Activated B cell treated with CpG ODN at 0.5 μM for 24 hours (primary cell): ENCODE measurements at regions of chr10 and their contacts with region 1.

Region 1: DNA sequence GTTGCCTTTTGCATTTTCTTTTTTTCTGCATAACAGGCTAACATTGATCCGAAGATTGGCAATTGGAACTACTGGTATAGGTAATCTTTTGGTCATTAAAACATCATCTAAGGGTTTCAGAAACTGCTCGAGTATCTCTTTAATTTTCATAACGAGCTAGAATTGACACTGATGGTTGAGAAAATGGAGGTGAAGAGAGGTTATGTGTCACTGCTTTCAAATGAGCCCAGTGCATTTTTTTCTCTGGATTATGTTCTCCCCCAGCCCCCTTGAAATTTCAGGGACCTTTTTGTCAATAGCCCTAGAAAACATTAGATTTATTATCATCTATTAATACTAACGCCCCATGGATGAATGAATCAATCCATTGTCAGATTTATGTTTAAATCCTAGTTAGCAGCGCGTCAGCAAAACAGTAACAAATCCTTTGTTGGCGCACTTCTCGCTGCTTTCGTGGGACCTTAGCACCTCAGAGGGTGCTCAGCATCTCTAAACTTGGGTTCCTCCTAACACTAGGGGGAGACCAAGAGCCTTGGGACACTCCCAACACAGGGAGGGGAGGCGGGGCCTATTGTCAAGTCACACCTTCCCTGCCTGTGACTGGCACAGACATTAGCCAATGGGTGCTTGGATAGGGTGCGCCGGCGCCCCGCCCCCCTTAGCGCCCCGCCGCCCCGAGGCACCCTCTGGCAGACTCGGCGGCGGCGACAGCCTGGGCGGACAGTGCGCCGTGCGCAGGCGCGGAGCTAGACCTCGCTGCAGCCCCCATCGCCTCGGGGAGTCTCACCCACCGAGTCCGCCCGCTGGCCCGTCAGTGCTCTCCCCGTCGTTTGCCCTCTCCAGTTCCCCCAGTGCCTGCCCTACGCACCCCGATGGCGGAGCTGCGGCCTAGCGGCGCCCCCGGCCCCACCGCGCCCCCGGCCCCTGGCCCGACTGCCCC is at the start of gene SUFU:
- DNase-seq: peak; percentile 88
- ATAC-seq: peak; percentile 74
- H3K4me3 Mint-ChIP-seq: no peak within 1 kb of the TSS
- H3K27ac Mint-ChIP-seq: peak within 1 kb of the TSS; percentile 68
- H3K4me1 Mint-ChIP-seq: peaks cover 23% of the 10 kb centered on the region
- H3K27me3 Mint-ChIP-seq: no peaks in the 10 kb centered on the region
- CTCF ChIP-seq: no peak
- total RNA-seq, gene SUFU: 5.7 and 7.4 TPM in 2 replicates

Region 2: GRCh38 chr10:101840741-101841453 is 662.7 kb before region 1 on chr10:
- CTCF ChIA-PET with region 1: no interaction called
- POLR2A ChIA-PET with region 1: no interaction called
- intact Hi-C with region 1: loop called (anchors 5 kb)
- DNase-seq: peak; percentile 80
- ATAC-seq: peak; percentile 64
- H3K4me3 Mint-ChIP-seq: peak overlapping the region; percentile 88
- H3K27ac Mint-ChIP-seq: peak overlapping the region; percentile 77
- H3K4me1 Mint-ChIP-seq: peaks cover 60% of the 10 kb centered on the region
- H3K27me3 Mint-ChIP-seq: no peaks in the 10 kb centered on the region
- CTCF ChIP-seq: no peak

Region 3: DNA sequence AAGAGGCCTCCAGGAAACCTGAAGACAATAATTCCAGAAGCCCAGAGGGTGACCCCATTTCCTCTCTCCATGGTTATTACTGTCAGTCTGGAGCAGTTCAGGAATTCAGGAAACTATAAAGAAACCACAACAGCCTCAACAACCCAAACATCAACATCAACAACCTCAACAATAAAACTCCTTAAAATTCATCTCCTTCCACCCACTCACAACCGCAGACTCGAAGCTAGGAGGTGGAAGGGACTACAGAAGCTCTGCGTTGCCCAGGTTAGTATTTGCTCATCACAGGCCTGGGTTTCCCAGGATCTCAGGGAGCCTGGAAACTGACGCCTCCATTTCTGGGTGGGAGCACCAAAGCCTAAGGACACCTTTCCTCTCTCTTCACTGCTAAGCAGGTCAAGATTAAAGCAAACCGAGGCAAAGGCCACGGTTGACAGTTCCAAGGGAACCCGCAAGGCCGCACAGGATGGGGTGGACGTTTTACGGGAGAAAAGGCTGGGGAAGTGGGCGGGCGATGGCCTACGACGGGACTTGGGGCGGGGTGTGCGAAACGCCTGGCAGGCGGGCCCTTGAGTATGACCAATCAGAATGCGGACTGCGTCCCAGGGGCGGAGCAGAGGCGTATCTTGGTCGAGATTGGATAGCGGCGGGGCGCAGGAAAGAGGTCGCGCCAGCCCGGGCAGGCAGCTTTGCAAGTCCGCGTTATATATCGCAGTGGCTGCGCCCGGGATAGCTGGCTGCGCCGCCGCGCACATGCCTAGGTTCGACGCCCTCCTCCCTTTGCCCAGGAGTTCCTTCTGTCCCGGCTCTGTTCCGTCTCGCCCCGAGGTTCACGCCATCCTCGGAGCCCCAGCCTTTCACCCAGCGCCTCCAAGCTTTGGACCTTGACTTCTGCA is 277.7 kb before region 1 on chr10 and contains the start of gene ELOVL3:
- CTCF ChIA-PET with region 1: no interaction called
- POLR2A ChIA-PET with region 1: no interaction called
- intact Hi-C with region 1: loop called (anchors 1 kb)
- DNase-seq: peak; percentile 69
- ATAC-seq: peak; percentile 94
- H3K4me3 Mint-ChIP-seq: peak within 1 kb of the TSS; percentile 71
- H3K27ac Mint-ChIP-seq: no peak within 1 kb of the TSS
- H3K4me1 Mint-ChIP-seq: peaks cover 19% of the 10 kb centered on the region
- H3K27me3 Mint-ChIP-seq: peaks cover 59% of the 10 kb centered on the region
- CTCF ChIP-seq: no peak
- total RNA-seq, gene ELOVL3: not detected in 2 replicates

Region 4: DNA sequence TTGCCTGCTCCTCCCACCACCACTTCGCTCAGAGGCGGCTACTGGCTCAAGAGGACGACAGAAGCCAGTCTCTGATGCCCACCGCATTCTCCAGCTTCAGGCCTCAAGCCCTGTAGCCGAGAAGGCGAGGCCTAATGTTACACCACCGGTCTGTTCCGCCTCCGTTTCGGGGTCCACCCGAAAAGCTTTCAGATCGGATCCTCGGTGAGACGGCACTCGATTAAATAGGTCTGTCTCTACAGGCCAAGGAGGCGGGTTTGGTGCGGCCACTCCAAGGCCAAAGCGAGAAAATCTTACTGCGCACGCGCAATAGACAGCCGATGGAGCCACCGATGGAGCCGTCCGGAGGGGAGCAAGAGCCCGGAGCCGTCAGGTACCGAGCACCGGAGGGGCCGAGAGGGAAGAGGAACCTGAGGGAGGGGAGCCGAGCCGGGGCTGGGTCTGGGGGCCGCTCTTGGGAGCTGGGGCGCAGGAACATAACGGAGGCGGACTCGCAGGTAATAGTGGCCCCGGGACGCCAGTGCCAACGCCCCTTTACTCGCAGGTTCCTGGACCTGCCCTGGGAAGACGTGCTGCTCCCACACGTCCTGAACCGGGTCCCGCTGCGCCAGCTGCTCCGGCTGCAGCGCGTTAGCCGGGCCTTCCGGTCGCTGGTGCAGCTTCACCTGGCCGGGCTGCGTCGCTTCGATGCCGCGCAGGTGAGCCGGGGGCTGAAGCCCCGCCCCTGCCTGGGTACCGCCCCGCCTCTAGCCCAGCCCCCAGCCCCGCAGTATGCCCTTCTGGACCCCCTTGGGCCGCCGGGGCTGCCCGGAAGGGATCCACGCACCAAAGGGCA is 82.5 kb before region 1 on chr10 and contains the start of gene FBXL15:
- CTCF ChIA-PET with region 1: interaction called, 3 read pairs
- POLR2A ChIA-PET with region 1: interaction called, 5 read pairs
- intact Hi-C with region 1: loop called (anchors 1 kb)
- DNase-seq: peak; percentile 93
- ATAC-seq: peak; percentile 78
- H3K4me3 Mint-ChIP-seq: peak within 1 kb of the TSS; percentile 98
- H3K27ac Mint-ChIP-seq: peak within 1 kb of the TSS; percentile 95
- H3K4me1 Mint-ChIP-seq: peaks cover 45% of the 10 kb centered on the region
- H3K27me3 Mint-ChIP-seq: peaks cover 17% of the 10 kb centered on the region
- CTCF ChIP-seq: no peak
- total RNA-seq, gene FBXL15: 15.7 and 18.9 TPM in 2 replicates

Region 5: GRCh38 chr10:102484021-102484420 is 19.5 kb before region 1 on chr10:
- CTCF ChIA-PET with region 1: no interaction called
- POLR2A ChIA-PET with region 1: no interaction called
- intact Hi-C with region 1: no loop called
- DNase-seq: no peak
- ATAC-seq: no peak
- H3K4me3 Mint-ChIP-seq: no peak overlapping the region
- H3K27ac Mint-ChIP-seq: no peak overlapping the region
- H3K4me1 Mint-ChIP-seq: peaks cover 3% of the 10 kb centered on the region
- H3K27me3 Mint-ChIP-seq: no peaks in the 10 kb centered on the region
- CTCF ChIP-seq: no peak

Region 6: DNA sequence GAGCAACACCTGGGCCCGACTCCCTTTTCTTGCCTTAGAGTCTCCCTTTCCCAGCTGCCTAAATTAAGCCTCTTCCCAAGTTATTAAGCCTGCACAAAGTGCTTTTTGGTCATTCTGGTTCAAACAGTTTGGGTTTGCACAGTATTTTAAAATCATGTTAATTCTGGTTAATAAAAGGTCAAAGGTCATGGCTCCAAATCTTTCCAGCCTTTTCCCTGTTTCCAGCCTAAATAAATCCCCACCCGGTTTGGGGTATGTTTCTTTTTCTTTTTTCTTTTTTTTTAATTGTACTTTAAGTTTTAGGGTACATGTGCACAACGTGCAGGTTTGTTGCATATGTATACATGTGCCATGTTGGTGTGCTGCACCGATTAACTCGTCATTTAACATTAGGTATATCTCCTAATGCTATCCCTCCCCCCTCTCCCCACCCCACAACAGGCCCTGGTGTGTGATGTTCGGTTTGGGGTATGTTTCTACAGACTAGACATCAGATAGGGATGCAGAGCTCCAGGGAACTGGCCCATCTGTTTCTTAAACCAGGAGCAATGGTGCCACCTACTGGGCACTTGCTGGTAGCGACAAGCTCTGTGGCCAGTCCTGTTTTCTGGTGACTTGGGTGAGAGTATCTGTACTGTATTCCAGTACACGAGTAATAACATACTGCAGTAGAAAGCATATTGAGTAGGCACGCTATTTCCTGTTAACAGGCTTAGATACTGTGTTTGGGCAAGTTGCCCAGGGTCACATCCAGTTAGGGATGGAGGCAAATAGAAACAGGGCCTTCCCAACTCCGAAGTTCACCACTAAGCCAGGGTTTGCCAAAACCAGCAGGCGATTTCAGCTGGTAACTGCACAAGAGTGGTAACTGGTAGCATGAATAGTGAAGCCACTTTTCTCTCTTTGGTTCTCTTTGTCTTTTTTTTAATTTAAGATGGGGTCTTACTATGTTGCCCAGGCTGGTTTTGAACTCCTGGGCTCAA is 80.2 kb after region 1 on chr10:
- CTCF ChIA-PET with region 1: interaction called, 47 read pairs
- POLR2A ChIA-PET with region 1: interaction called, 10 read pairs
- intact Hi-C with region 1: loop called (anchors 1 kb)
- DNase-seq: peak; percentile 59
- ATAC-seq: peak; percentile 98
- H3K4me3 Mint-ChIP-seq: no peak overlapping the region
- H3K27ac Mint-ChIP-seq: no peak overlapping the region
- H3K4me1 Mint-ChIP-seq: no peaks in the 10 kb centered on the region
- H3K27me3 Mint-ChIP-seq: no peaks in the 10 kb centered on the region
- CTCF ChIP-seq: peak; percentile 64

Region 7: DNA sequence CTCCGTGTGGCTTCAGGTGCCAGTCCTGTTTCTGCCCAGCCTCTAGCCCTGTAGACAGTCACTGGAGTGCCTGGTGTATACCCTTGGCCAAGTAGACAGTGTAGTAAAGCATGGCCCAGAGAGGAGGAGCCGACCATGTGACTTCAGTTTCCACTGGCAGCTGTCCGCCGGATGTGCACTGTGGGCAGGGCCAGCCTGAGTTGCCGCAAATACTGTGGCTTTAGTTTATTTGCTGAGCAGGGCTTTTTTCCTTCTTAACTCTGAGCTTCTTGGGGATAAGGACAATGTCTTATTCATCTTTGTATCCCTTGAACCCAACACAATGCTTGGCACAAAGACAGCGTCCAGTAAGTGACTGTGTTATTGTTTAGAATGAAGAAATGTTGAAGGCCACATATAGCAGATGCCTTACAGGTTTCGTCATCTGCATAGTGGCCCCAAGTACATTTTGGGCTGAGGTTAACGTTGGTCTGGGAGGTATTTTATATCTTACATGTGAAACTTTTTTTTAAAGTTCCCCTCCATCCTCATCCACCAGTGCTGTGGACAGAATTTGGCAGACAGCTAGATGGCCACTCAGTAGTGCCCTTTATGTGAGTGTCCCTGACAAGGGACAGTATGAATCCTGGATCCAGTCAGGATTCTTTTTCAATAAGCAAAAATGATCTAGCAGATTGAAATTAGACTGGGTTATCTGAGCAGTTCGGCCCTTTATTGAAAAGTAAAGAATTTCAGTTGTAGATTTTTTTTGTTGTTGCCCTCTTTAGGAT is 293.0 kb after region 1 on chr10:
- CTCF ChIA-PET with region 1: no interaction called
- POLR2A ChIA-PET with region 1: no interaction called
- intact Hi-C with region 1: loop called (anchors 1 kb)
- DNase-seq: peak; percentile 51
- ATAC-seq: peak; percentile 99
- H3K4me3 Mint-ChIP-seq: peak overlapping the region; percentile 68
- H3K27ac Mint-ChIP-seq: peak overlapping the region; percentile 88
- H3K4me1 Mint-ChIP-seq: peaks cover 47% of the 10 kb centered on the region
- H3K27me3 Mint-ChIP-seq: no peaks in the 10 kb centered on the region
- CTCF ChIP-seq: no peak